ENCODE measurements at regions of chr6 and their contacts with region 1.

Region 1: GRCh38 chr6:3324262-3324942 is 65.7 kb downstream of the PSMG4 start:
- DNase-seq: peak; percentile 78

Region 2: DNA sequence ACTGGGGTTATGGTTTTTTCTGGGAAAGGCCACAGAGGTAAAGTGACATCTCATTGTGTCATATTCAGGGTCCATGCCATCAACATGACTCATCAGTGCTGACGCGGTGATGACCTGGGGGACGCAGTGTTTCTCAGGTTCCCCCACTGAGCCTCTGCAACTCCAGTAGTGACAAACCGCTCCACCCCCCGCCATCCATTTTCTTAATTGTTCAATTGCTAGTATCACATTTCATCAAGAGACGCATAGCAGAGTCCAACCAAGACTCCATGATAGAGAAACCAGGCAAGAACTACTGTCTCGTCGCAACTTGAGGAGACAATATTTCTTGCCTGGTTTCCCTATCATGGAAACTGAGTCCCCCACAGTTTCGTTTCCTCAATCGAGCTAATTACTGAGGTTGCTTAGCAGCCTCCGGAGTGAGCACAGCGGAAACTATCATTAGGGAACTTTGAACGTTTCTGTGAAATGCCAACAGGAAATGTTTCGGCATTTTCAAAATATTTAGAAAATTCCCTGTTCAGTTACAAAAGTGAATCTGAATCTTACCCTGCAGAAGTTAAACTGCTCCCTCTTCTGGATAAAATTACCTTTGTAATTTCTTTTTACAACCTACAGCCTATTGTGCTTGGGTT is 470.5 kb before region 1 on chr6:
- intact Hi-C with region 1: no loop called
- DNase-seq: peak; percentile 89

Region 3: DNA sequence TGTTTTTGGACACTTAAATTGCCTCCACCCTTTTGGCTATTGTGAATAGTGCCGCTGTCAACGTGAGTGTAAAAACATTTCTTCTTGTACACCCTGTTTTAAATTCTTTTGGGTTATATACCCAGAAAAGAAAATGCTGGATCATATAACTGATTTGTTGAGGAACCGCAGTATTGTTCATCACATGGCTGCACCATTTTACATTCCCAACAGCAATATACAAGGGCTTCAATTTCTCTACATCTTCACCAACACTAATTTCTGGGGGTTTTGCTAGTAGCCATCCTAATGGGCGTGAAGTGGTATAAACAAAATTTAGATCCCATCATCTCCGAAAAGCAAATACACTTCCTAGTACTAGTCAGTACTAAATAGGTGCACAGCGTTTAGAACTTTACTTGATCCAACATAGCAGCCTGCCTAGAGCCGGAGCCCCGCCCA is 206.5 kb before region 1 on chr6:
- intact Hi-C with region 1: no loop called
- DNase-seq: no peak

Region 4: GRCh38 chr6:3442431-3443220 is 118.2 kb after region 1 on chr6:
- intact Hi-C with region 1: loop called in 1 of 2 experiments (anchors 10 kb)
- DNase-seq: no peak

Region 5: DNA sequence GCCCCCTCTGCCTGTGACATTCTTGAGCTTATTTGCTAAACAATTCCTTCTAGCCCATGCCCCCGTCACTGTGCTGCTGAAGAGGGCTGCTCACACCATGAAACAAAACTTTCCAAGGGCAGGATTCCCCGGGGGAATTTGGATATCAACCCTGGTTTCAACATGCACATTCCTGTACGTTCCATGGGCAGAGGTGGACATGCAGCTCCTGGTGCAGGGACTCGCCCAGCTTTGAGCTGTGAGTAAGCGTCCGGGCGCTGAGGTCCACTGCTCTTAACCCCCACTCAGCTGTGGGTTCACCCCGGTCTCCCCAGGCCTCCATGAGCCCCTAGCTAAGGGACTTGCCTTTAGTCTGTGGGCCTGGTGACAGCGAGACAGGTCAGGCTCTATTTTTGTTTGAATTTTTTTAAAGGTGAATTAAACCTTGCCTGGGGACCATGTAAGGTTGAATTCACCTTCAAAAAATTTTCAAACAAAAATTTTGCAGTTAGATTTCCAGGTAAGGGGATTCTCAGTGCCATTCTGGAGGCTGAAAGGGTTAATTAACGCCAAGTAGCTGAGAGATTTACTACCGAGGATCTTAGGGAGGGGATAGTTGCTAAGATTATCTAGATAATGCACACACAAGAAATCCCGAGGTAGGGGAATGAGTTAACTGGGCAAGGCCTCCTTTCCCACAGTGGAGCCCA is 202.7 kb after region 1 on chr6:
- intact Hi-C with region 1: no loop called
- DNase-seq: no peak

Region 6: GRCh38 chr6:3697609-3698008 is 373.2 kb after region 1 on chr6:
- intact Hi-C with region 1: no loop called
- DNase-seq: no peak

Measured in posterior vena cava (tissue), 2 donors.